HEK293T (cell line): ENCODE measurements at regions of chr14 and their contacts with region 1.

Region 1: DNA sequence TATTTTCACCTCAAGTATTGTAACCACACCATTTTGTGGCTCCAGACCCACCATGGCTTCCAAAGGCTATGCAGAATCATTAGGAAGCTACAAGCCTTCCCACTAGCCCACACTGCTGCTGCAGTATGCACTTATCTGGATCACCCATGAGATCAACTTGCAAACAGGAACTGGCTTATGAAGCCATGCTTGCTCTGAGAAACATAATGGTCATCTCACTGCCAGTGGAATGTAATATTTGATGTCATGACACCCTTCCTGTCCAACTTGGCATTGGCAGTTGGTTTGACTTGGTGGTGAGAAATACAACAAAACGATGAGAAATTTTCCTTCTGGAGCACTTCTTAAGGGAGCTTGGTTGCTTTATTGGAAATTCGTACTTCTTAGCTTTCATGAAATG is 69.3 kb upstream of the FRMD6 start:
- DNase-seq: no peak

Region 2: GRCh38 chr14:51593397-51593796 is 11.0 kb after region 1 on chr14:
- CTCF ChIA-PET with region 1: interaction called, 12 read pairs
- POLR2A ChIA-PET with region 1: no interaction called
- DNase-seq: no peak